Lower leg skin (tissue), 4 donors: ENCODE measurements at regions of chr3 and their contacts with region 1.

Region 1: DNA sequence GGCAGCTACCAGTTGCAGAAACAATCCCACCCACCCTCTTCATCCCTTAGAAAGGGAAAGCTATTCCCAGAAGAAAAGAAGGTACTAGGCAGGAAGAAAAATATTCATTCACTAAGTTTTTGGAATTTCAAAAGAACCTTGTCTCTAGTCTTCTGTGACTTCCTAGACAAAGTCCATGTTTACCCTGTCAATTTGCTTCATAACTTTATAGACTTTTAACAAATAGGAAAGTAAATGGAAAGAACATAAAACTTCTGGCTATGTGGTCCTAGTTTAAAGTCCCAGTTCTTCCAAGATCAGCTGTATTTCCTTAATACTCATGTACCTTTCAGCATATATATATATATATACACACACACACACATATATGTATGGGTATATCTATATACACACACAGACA is 143.7 kb upstream of the SNTN start:
- DNase-seq: no peak
- H3K4me3 ChIP-seq: no peak overlapping the region
- CTCF ChIP-seq: no peak
- POLR2A ChIP-seq: no peak

Region 2: GRCh38 chr3:63540759-63541158 is 32.0 kb after region 1 on chr3:
- intact Hi-C with region 1: loop called (anchors 1 kb)
- DNase-seq: no peak
- H3K4me3 ChIP-seq: no peak overlapping the region
- CTCF ChIP-seq: no peak
- POLR2A ChIP-seq: no peak